HepG2 (cell line): ENCODE measurements at regions of chr2 and their contacts with region 1.

Region 1: GRCh38 chr2:120312861-120313694 is 32.9 kb upstream of the INHBB start:
- DNase-seq: peak; percentile 66
- ATAC-seq: peak; percentile 77
- H3K4me3 ChIP-seq: peak overlapping the region; percentile 55 to 70 (median 63)
- H3K27ac ChIP-seq: no peak overlapping the region
- H3K4me1 ChIP-seq: peaks cover 20% of the 10 kb centered on the region
- H3K27me3 ChIP-seq: peaks cover 22 to 46% of the 10 kb centered on the region in 2 experiments; a peak in 4 of 5 replicates
- CTCF ChIP-seq: peak; percentile 98
- EP300 ChIP-seq: no peak
- POLR2A ChIP-seq: no peak
- RAD21 ChIP-seq: peak; percentile 91

Region 2: GRCh38 chr2:120066800-120067547 is 246.1 kb before region 1 on chr2:
- CTCF ChIA-PET with region 1: no interaction called
- POLR2A ChIA-PET with region 1: no interaction called
- in situ Hi-C with region 1: no loop called
- intact Hi-C with region 1: no loop called
- DNase-seq: peak; percentile 98
- ATAC-seq: peak; percentile 98
- H3K4me3 ChIP-seq: peak overlapping the region; percentile 30 to 43 (median 36); a peak in 5 of 6 replicates
- H3K27ac ChIP-seq: peak overlapping the region; percentile 77
- H3K4me1 ChIP-seq: peaks cover 70% of the 10 kb centered on the region
- H3K27me3 ChIP-seq: no peaks in the 10 kb centered on the region
- CTCF ChIP-seq: peak; percentile 26; the same call in 1 of the 2 replicates
- EP300 ChIP-seq: peak in 1 of 2 experiments; percentile 95; a peak in 3 of 4 replicates
- POLR2A ChIP-seq: no peak; a peak in 1 of 4 replicates
- RAD21 ChIP-seq: 0 out of 2 replicates have a peak, but pooled peaks have one; percentile 16

Region 3: GRCh38 chr2:120109186-120110061 is 203.7 kb before region 1 on chr2:
- CTCF ChIA-PET with region 1: no interaction called
- POLR2A ChIA-PET with region 1: no interaction called
- in situ Hi-C with region 1: no loop called
- intact Hi-C with region 1: loop called (anchors 5 kb)
- DNase-seq: peak; percentile 55
- ATAC-seq: peak; percentile 83
- H3K4me3 ChIP-seq: no peak overlapping the region
- H3K27ac ChIP-seq: no peak overlapping the region
- H3K4me1 ChIP-seq: peaks cover 6% of the 10 kb centered on the region; the same call in 1 of the 2 replicates
- H3K27me3 ChIP-seq: no peaks in the 10 kb centered on the region
- CTCF ChIP-seq: peak; percentile 73
- EP300 ChIP-seq: no peak
- POLR2A ChIP-seq: no peak
- RAD21 ChIP-seq: peak; percentile 37; the same call in 1 of the 2 replicates

Region 4: GRCh38 chr2:120206022-120206581 is 107.0 kb before region 1 on chr2:
- CTCF ChIA-PET with region 1: interaction called, 3 read pairs
- POLR2A ChIA-PET with region 1: no interaction called
- in situ Hi-C with region 1: loop called (anchors 10 kb)
- intact Hi-C with region 1: loop called (anchors 1 kb)
- DNase-seq: no peak
- ATAC-seq: peak; percentile 40
- H3K4me3 ChIP-seq: no peak overlapping the region
- H3K27ac ChIP-seq: no peak overlapping the region
- H3K4me1 ChIP-seq: peaks cover 25% of the 10 kb centered on the region
- H3K27me3 ChIP-seq: peaks cover 2 to 26% of the 10 kb centered on the region in 2 experiments; a peak in 3 of 5 replicates
- CTCF ChIP-seq: peak; percentile 86
- EP300 ChIP-seq: no peak
- POLR2A ChIP-seq: no peak
- RAD21 ChIP-seq: peak; percentile 31; the same call in 1 of the 2 replicates

Region 5: DNA sequence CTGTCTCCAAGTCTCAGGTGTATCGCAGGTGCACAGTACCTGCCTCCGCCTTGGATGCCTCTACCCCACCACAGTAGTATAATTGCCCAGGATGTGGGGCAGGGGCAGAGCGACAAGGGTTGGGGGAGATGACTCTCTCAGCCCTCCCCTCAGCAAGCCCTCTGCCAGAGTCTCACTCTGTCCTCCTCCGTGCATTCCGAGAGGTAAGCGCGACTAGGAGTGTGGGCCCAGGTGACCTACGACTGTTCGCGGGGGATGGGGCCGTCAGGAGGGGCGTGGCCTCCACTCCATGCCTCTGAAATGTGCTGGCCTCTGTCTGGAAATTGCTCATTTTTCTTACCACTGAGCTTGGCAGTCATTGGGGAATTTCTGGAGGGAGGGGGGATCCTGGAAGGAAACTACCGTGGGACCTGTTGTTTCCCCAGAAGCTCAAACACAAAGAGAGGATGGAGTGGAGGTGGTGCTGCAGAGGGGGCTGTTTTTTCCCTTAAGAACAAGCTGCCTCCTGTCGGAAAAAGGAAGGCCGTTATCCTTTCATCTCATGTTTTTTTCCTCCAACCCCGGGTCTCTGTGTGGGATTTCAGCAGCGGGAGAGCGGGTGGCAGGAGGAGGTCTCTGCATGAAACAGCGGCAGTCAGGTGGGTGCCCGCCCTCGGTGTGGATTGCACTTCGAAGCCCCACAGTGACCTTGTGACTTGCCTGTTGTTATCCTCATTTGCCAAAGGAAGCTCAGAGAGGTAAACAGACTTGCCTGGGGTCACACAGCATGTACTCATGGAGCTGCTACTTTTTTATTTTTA is 73.4 kb before region 1 on chr2:
- CTCF ChIA-PET with region 1: no interaction called
- POLR2A ChIA-PET with region 1: no interaction called
- in situ Hi-C with region 1: no loop called
- intact Hi-C with region 1: loop called (anchors 2 kb)
- DNase-seq: peak; percentile 37
- ATAC-seq: peak; percentile 48
- H3K4me3 ChIP-seq: peak overlapping the region; percentile 29 to 68 (median 48)
- H3K27ac ChIP-seq: peak overlapping the region; percentile 4
- H3K4me1 ChIP-seq: peaks cover 48% of the 10 kb centered on the region
- H3K27me3 ChIP-seq: peaks cover 4 to 10% of the 10 kb centered on the region in 2 experiments; a peak in 4 of 5 replicates
- CTCF ChIP-seq: no peak
- EP300 ChIP-seq: no peak
- POLR2A ChIP-seq: no peak
- RAD21 ChIP-seq: no peak

Region 6: DNA sequence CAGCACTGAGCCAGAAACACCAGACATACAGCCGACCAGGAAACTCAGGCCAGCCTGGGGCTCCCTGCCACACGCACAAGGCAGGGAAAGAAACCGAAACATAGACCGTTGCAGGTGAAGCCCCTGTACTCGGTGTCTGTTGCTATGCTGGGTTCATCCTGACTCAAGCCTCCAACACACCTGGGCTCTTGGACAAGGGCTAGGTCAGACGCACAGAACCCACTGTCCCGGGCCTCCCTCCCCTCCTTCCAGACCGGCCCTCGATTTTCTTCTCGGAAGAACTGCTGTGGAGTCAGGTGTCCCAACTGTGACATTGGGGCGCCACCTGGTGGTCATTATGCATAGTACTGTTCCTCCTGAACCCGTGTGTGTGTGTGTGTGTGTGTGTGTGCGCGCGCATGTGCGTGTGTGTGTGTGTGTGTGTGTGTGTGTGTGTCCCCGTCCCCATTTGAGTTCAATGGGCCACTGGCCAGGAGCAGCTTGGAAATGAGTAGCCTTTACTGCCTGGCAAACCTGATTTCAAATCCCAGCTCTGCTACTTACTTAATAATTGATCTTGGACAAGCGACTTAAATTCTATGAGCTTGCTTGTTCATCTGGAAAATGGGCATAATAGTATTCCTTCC is 367.2 kb after region 1 on chr2:
- CTCF ChIA-PET with region 1: interaction called, 15 read pairs
- POLR2A ChIA-PET with region 1: no interaction called
- in situ Hi-C with region 1: no loop called
- intact Hi-C with region 1: loop called (anchors 10 kb)
- DNase-seq: peak; percentile 82
- ATAC-seq: peak; percentile 85
- H3K4me3 ChIP-seq: no peak overlapping the region
- H3K27ac ChIP-seq: no peak overlapping the region
- H3K4me1 ChIP-seq: peaks cover 5% of the 10 kb centered on the region; the same call in 1 of the 2 replicates
- H3K27me3 ChIP-seq: peaks cover 2 to 63% of the 10 kb centered on the region in 2 experiments; a peak in 3 of 5 replicates
- CTCF ChIP-seq: peak; percentile 93
- EP300 ChIP-seq: no peak
- POLR2A ChIP-seq: no peak
- RAD21 ChIP-seq: peak; percentile 88